Activated T-helper 2 cell treated with anti-CD3 and anti-CD28 coated beads, Interferon-gamma antibody, Interleukin-2, Interleukin-4, amounts not matched to agents 10 μg/mL and 5 μg/mL and 100 μg/mL, durations not matched to agents 14 hours and 24 hours and 36 hours (primary cell): ENCODE measurements at regions of chr1 and their contacts with region 1.

Region 1: DNA sequence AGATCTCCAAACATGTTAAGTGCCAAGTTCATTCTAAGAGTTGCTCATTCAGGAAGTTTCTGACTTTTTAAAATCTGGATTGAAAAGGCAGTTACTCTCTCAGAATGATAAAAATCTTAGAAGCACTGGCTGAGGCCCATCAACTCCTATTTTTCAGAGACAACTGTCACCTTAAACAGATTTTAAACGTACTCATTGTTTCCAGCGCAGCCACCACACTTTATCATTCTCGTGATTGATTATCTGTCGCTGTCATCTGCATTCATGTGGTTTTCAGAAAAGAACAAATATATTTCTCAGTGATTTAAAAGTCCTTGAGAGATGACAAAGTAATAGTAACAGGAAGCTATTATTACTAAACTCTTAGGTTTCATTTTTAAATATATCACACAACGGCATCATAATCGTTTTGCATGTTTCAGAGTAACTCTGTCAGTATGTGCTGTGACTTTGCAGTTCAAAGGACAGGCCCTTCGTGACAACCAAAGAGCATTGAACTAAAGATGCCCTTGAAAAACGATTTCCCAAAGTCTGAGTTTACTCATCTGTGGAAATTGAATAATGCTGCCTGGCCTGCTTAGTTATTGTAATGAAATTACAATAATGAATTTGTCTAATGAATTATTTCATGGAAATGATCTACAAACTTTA is 14.9 kb upstream of the KCNK1 start:
- DNase-seq: peak; percentile 41
- H3K4me3 Mint-ChIP-seq: peak overlapping the region; percentile 34
- H3K27ac Mint-ChIP-seq: peak overlapping the region; percentile 82
- H3K4me1 Mint-ChIP-seq: peaks cover 39% of the 10 kb centered on the region
- H3K27me3 Mint-ChIP-seq: peaks cover 3% of the 10 kb centered on the region

Region 2: DNA sequence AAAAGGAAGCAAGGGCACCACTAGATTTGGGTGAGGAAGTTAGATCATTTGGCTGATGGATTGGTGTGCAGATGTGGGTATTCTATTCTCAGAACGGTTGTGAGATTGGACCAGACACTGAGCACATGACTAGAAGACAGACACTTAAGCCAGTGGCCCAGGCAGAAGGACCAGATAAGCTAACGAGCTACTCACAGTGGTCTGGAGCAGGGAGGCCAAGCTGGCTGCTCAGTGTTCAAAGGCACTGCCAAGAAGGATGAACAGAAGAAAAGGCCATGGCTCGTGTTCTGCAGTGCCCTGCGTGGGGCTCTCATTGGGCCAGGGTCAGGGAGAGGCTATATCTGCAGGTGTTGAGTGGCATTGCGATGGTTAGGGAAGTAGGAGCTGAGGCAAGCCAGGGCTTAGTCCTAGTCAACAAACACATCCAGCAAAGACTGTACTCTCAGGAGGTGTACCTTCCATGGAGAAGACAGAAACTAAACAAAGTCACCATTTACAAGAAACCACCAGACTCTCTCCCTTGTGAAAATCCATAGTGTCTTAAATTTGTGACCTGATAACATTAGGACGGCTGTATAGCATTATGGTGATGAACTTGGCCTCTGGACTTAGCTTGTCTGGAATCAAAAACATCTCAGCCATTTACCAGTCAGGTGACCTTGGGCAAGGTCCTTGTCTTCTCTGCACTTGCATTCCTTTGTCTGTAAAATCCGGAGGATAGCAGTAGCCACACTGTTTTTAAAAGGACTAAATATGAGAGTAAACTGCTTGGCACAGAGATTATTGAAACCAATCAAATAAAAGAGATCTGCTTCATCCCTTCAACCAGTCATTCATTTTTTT is 1243.6 kb before region 1 on chr1:
- intact Hi-C with region 1: no loop called
- DNase-seq: no peak
- H3K4me3 Mint-ChIP-seq: no peak overlapping the region
- H3K27ac Mint-ChIP-seq: no peak overlapping the region
- H3K4me1 Mint-ChIP-seq: no peaks in the 10 kb centered on the region
- H3K27me3 Mint-ChIP-seq: no peaks in the 10 kb centered on the region

Region 3: DNA sequence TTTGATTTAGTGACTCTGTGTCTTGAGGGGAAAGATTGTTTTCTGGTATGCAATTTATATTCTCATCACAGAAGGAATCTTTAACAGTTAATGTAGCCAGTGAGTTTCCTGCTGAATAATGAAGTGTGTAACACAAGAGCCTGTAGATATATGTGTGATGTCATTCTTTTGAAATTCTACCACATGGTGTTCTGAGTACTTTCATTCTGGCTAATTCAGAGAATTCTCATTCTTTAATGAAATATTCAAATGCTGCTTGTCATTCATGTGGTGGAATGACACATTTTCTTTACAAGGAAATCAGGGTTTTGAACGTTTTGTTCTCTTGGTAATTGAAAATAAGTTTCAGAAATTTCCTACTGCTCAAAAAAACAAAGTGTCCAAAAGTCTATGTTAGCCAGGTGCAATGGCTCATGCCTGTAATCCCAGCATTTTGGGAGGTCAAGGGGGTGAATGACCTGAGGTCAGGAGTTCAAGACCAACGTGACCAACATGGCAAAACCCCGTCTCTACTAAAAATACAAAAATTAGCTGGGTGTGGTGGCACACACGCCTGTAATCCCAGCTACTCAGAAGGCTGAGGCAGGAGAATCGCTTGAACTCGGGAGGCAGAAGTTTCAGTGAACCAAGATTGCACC is 191.9 kb before region 1 on chr1:
- intact Hi-C with region 1: loop called (anchors 5 kb)
- DNase-seq: no peak
- H3K4me3 Mint-ChIP-seq: no peak overlapping the region
- H3K27ac Mint-ChIP-seq: peak overlapping the region; percentile 18
- H3K4me1 Mint-ChIP-seq: peaks cover 19% of the 10 kb centered on the region
- H3K27me3 Mint-ChIP-seq: peaks cover 11% of the 10 kb centered on the region

Region 4: GRCh38 chr1:233512538-233512937 is 86.5 kb before region 1 on chr1:
- intact Hi-C with region 1: loop called (anchors 5 kb)
- DNase-seq: no peak
- H3K4me3 Mint-ChIP-seq: no peak overlapping the region
- H3K27ac Mint-ChIP-seq: no peak overlapping the region
- H3K4me1 Mint-ChIP-seq: peaks cover 2% of the 10 kb centered on the region
- H3K27me3 Mint-ChIP-seq: no peaks in the 10 kb centered on the region

Region 5: GRCh38 chr1:233613252-233614174 is 14.5 kb after region 1 on chr1 and contains the start of gene KCNK1:
- intact Hi-C with region 1: loop called (anchors 1 kb)
- DNase-seq: no peak
- H3K4me3 Mint-ChIP-seq: peak within 1 kb of the TSS; percentile 88
- H3K27ac Mint-ChIP-seq: peak within 1 kb of the TSS; percentile 76
- H3K4me1 Mint-ChIP-seq: peaks cover 32% of the 10 kb centered on the region
- H3K27me3 Mint-ChIP-seq: peaks cover 56% of the 10 kb centered on the region
- total RNA-seq, gene KCNK1: 5.4 and 6.1 TPM in 2 replicates

Region 6: GRCh38 chr1:233627376-233627775 is 28.4 kb after region 1 on chr1:
- intact Hi-C with region 1: loop called (anchors 1 kb)
- DNase-seq: no peak
- H3K4me3 Mint-ChIP-seq: no peak overlapping the region
- H3K27ac Mint-ChIP-seq: no peak overlapping the region
- H3K4me1 Mint-ChIP-seq: peaks cover 7% of the 10 kb centered on the region
- H3K27me3 Mint-ChIP-seq: peaks cover 4% of the 10 kb centered on the region

Region 7: GRCh38 chr1:233668725-233669294 is 69.8 kb after region 1 on chr1:
- intact Hi-C with region 1: loop called (anchors 5 kb)
- DNase-seq: no peak
- H3K4me3 Mint-ChIP-seq: no peak overlapping the region
- H3K27ac Mint-ChIP-seq: no peak overlapping the region
- H3K4me1 Mint-ChIP-seq: peaks cover 7% of the 10 kb centered on the region
- H3K27me3 Mint-ChIP-seq: peaks cover 3% of the 10 kb centered on the region

Region 8: DNA sequence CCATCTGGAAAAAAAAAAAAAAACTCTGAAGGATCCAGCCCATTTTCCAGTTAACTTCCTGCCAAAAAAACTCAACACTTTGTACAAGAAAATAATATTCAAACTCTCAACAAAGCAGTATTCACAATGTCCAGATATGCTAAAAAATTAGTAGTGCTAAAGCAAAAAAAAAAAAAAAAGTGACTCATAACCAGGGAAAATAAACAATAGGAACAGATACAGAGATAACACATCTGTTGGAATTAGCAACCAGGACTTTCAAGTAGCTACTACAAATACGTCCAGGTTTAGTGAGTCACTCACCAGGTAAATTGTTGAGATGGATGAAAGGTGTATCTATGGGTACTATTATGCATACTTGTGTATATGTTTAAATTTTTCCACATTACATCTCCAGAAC is 160.6 kb after region 1 on chr1:
- intact Hi-C with region 1: no loop called
- DNase-seq: no peak
- H3K4me3 Mint-ChIP-seq: no peak overlapping the region
- H3K27ac Mint-ChIP-seq: no peak overlapping the region
- H3K4me1 Mint-ChIP-seq: no peaks in the 10 kb centered on the region
- H3K27me3 Mint-ChIP-seq: peaks cover 8% of the 10 kb centered on the region

Region 9: GRCh38 chr1:234271243-234271606 is 672.2 kb after region 1 on chr1:
- intact Hi-C with region 1: loop called (anchors 5 kb)
- DNase-seq: no peak
- H3K4me3 Mint-ChIP-seq: no peak overlapping the region
- H3K27ac Mint-ChIP-seq: no peak overlapping the region
- H3K4me1 Mint-ChIP-seq: peaks cover 28% of the 10 kb centered on the region
- H3K27me3 Mint-ChIP-seq: peaks cover 20% of the 10 kb centered on the region